Motor neuron (in vitro differentiated cells): ENCODE measurements at regions of chr3 and their contacts with region 1.

Region 1: GRCh38 chr3:142993958-142994442 is 7.4 kb upstream of the U2SURP start:
- ATAC-seq: peak in 6 of 8 experiments; percentile 21 to 75 (median 50)
- H3K4me3 ChIP-seq: no peak overlapping the region
- H3K27ac ChIP-seq: no peak overlapping the region
- H3K4me1 ChIP-seq: peaks cover 0 to under 1% of the 10 kb centered on the region in 2 donors

Region 2: GRCh38 chr3:142578327-142579223 is 415.4 kb before region 1 on chr3 and contains the start of gene ATR:
- in situ Hi-C with region 1: loop called in 6 of 9 experiments (anchors 25 kb)
- ATAC-seq: peak; percentile 90 to 98 (median 96)
- H3K4me3 ChIP-seq: peak within 1 kb of the TSS; percentile 49 to 83 (median 70)
- H3K27ac ChIP-seq: peak within 1 kb of the TSS; percentile 67 to 83
- H3K4me1 ChIP-seq: peaks cover 6 to 15% of the 10 kb centered on the region in 2 donors
- total RNA-seq, gene ATR: 16.4 to 46.2 (median 23.4) TPM

Region 3: DNA sequence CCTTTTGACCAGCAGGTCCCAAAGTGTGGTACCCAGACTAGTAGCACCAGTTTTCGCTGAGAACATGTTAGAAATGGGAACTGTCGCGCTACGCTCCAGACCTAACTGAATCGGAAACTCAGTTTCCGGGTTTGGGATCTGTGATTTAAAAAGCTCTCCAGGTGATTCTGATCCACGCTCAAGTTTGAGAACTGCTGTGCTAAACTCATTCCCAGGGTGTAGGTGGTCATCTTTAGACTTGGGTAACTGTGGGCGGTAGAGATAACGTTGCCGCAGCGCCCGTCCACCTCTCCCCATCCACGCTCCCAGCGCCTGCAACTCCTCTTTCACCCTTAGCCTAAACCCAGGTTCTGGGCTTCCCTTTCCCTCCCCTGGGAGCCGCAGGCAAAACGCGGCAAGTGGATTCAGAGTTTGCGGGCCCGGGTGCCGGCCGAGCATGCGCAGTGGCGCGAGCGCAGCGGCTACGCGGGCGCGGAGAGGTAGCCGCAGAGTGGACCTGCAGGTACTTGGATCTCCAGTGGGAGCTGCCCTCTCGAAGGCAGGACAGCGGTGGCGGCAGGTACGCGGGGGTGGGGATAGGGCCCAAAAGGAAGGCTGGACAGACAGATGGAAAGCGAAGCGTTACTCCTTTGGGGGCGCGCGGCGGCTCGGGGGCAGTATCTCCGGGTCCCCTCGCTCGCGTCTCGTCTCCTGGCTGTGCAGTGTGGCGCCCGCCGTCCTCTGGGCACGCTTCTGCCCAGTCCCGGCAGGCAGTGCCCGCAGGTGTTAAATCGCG is 397.9 kb before region 1 on chr3 and contains the start of gene PLS1:
- in situ Hi-C with region 1: loop called in 8 of 9 experiments (anchors 10 to 25 kb)
- ATAC-seq: peak; percentile 88 to 98 (median 94)
- H3K4me3 ChIP-seq: peak within 1 kb of the TSS; percentile 59 to 94 (median 78)
- H3K27ac ChIP-seq: no peak within 1 kb of the TSS
- H3K4me1 ChIP-seq: no peaks in the 10 kb centered on the region
- total RNA-seq, gene PLS1: 1.6 to 54.7 (median 2.7) TPM

Region 4: DNA sequence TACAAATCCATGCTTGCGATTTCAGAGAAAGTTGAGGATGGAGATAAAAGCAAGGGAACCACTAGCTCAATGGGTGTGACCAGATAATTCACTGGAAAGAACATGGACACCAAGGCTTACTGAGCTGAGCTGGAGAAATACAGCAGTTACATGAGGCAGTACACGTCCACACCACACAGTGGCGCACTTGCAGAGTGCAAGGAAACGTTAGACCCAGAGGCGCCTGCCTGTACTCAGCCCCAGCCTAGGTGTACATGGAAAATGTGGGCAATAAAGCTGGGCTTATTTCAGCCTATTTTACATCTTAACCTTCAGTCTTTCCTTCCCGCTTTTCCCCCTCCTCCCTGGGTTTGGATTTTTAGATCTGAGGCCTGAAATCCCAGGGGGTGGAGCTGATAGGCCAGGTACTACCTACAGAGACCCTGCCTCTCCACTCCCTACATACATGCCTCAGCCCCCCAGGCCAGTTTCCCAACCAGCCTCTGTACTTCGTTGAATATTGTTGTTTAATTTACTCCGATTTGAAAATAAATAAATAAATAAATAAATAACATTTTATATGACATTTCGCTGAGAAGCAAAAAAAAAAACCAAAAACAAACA is 165.2 kb before region 1 on chr3:
- in situ Hi-C with region 1: loop called in 6 of 9 experiments (anchors 5 to 25 kb)
- ATAC-seq: peak; percentile 95 to 100 (median 100)
- H3K4me3 ChIP-seq: no peak overlapping the region
- H3K27ac ChIP-seq: no peak overlapping the region
- H3K4me1 ChIP-seq: no peaks in the 10 kb centered on the region

Region 5: GRCh38 chr3:142839831-142840230 is 154.2 kb before region 1 on chr3:
- in situ Hi-C with region 1: loop called in 3 of 9 experiments (anchors 10 to 25 kb)
- ATAC-seq: no peak
- H3K4me3 ChIP-seq: no peak overlapping the region
- H3K27ac ChIP-seq: no peak overlapping the region
- H3K4me1 ChIP-seq: no peaks in the 10 kb centered on the region

Region 6: DNA sequence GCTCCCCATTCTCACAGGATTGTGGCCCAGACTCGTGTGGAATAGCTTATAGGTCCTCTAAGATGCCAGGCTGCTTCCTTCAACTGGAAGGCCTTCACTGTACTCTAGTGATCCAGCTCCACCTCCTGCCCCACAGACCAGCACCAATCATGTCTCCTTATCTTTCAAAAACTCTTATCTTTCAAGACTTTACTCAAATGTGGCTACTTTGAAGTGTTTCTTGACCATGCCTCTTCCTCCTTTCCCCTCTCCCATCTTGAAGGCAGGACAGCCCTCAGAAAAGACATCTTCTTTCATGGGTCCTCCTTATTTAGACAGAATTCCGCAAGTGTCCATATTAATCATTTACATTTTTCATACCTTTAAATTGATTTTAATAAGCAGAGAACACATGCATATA is 267.8 kb after region 1 on chr3:
- in situ Hi-C with region 1: no loop called
- ATAC-seq: no peak
- H3K4me3 ChIP-seq: no peak overlapping the region
- H3K27ac ChIP-seq: no peak overlapping the region
- H3K4me1 ChIP-seq: peaks cover 0 to 3% of the 10 kb centered on the region in 2 donors